GM12878 (cell line): ENCODE measurements at regions of chr9 and their contacts with region 1.

Region 1: DNA sequence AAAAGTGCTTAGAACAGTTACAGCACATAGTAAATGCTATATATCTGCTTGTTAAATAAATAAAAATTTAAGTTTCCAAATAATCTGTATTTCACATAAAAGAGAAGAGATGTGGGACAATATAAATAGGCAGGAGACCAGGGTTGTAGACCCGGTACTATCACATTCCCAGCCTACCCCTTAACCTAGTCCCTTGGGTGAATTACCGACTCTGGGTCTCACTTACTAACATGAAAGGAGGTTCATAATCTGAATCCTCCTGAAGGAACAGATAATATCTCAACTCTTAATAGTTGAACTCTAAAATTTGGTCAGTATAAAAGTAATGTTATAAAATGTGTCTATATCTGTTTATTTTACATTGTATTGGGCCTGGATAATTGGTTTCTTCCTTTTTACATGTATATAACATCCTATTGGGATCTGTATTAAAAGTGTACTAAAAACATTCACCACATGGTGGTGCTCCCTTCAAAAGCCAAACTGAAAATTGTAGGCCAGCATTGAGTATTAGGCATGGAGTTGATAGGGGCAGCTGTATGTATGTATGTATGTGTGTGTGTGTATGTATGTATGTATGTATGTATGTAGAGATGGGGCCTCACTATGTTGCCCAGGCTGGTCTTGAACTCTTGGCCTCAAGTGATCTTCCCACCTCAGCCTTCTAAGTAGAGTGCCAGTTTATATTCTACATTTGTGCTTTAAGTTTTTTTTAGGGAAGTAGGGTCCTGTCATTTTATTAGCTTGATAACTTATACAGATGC is 64.2 kb upstream of the ABL1 start:
- DNase-seq: no peak
- ATAC-seq: peak; percentile 83
- H3K4me3 ChIP-seq: no peak overlapping the region
- H3K27ac ChIP-seq: no peak overlapping the region
- H3K4me1 ChIP-seq: peaks cover 27% of the 10 kb centered on the region
- H3K27me3 ChIP-seq: no peaks in the 10 kb centered on the region
- CTCF ChIP-seq: peak; percentile 55 to 58 (median 55)
- EP300 ChIP-seq: no peak
- POLR2A ChIP-seq: no peak
- RAD21 ChIP-seq: peak; percentile 85

Region 2: DNA sequence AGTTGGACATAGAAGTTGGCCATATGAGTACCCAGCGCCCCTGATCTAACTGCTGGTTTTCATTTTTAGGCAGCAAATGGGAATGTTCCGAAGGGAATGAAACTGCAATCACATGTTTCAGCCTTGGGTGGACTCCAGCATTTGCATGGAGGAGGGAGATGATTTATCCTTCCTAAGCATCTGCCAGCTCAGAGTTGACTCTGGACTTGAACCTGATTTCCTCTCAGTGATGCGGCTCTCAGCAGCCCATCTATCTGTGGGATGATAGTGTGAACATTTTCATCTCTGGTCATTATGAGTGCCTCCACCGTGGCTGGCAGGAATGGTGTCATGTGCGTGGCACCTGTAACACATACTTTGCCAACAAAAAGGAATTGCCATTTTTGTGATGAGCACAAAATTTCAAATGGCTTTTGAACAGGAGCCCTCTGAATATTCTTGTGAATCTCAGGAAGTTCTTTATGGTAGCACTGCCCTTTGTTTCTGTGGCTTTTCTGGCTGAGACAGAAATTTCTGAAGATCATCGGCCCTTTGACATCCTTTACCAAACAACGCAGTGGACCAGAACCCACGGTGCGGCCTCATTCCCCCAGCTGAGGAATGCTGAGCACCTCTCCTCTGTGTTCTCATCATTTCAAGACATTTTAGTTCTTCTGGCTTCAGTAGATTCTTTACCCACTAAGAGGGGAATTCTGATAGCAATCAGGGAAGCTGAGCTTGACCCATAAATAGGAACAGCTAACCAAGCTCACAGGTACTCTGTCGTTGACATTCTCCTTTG is 163.0 kb before region 1 on chr9:
- CTCF ChIA-PET with region 1: no interaction called
- POLR2A ChIA-PET with region 1: no interaction called
- RAD21 ChIA-PET with region 1: no interaction called
- SMC1A ChIA-PET with region 1: no interaction called
- in situ Hi-C with region 1: no loop called
- intact Hi-C with region 1: no loop called
- DNase-seq: no peak
- ATAC-seq: no peak
- H3K4me3 ChIP-seq: no peak overlapping the region
- H3K27ac ChIP-seq: no peak overlapping the region
- H3K4me1 ChIP-seq: no peaks in the 10 kb centered on the region
- H3K27me3 ChIP-seq: no peaks in the 10 kb centered on the region
- CTCF ChIP-seq: no peak
- EP300 ChIP-seq: no peak
- POLR2A ChIP-seq: no peak
- RAD21 ChIP-seq: no peak

Region 3: DNA sequence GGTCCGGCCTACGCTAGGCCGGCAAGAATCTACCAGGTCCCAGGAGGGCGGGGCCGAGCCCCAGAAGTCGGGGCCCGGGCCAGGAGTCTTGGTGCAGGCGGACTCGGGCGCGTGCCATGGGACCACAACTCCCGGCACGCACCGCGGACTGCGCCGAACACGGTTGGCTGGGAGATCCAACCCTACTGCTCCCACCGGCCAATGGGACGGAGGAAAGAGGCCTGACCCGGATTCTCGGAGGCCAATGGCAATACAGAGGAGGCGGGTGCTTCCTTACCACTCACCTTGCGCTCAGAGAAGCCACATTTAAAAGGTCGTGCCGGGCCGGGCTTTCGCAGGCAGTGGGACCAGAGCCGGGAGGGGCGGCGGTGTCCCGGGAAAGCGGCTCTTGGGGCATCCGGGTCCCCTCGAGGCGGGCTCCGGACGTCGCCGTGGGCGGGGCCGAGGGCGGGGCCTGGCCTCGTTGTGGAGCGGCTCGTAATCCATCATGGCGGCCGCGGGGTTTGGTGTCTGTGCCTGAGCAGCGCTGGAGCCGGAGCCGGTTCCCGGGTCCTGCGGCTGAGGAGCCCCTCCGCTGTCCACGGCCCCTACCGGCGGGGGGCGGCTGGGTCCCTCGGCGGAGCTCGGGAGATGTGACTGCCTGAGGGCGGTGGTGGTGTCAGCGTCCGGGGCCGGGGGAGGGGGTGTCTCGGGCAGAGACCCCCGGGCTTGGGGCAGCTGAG is 58.1 kb before region 1 on chr9:
- CTCF ChIA-PET with region 1: interaction called, 22 read pairs
- POLR2A ChIA-PET with region 1: no interaction called
- RAD21 ChIA-PET with region 1: interaction called, 10 read pairs
- SMC1A ChIA-PET with region 1: interaction called, 14 read pairs
- in situ Hi-C with region 1: no loop called
- intact Hi-C with region 1: no loop called
- DNase-seq: peak; percentile 91
- ATAC-seq: peak; percentile 99
- H3K4me3 ChIP-seq: peak overlapping the region; percentile 98
- H3K27ac ChIP-seq: peak overlapping the region; percentile 96
- H3K4me1 ChIP-seq: no peaks in the 10 kb centered on the region
- H3K27me3 ChIP-seq: no peaks in the 10 kb centered on the region
- CTCF ChIP-seq: no peak
- EP300 ChIP-seq: no peak
- POLR2A ChIP-seq: peak; percentile 90
- RAD21 ChIP-seq: no peak

Region 4: GRCh38 chr9:130842545-130842944 is 71.7 kb after region 1 on chr9:
- CTCF ChIA-PET with region 1: interaction called, 9 read pairs
- POLR2A ChIA-PET with region 1: no interaction called
- RAD21 ChIA-PET with region 1: no interaction called
- SMC1A ChIA-PET with region 1: interaction called, 14 read pairs
- in situ Hi-C with region 1: no loop called
- intact Hi-C with region 1: no loop called
- DNase-seq: no peak
- ATAC-seq: 0 out of 3 replicates have a peak, but pooled peaks have one; percentile 24
- H3K4me3 ChIP-seq: no peak overlapping the region
- H3K27ac ChIP-seq: no peak overlapping the region
- H3K4me1 ChIP-seq: no peaks in the 10 kb centered on the region; the same call in 1 of the 2 replicates
- H3K27me3 ChIP-seq: no peaks in the 10 kb centered on the region
- CTCF ChIP-seq: no peak
- EP300 ChIP-seq: no peak
- POLR2A ChIP-seq: no peak
- RAD21 ChIP-seq: no peak

Region 5: GRCh38 chr9:130866474-130866965 is 95.7 kb after region 1 on chr9:
- CTCF ChIA-PET with region 1: interaction called, 190 read pairs
- POLR2A ChIA-PET with region 1: no interaction called
- RAD21 ChIA-PET with region 1: interaction called, 28 read pairs
- SMC1A ChIA-PET with region 1: interaction called, 25 read pairs
- in situ Hi-C with region 1: loop called (anchors 5 kb)
- intact Hi-C with region 1: loop called (anchors 1 kb)
- DNase-seq: peak; percentile 17
- ATAC-seq: peak; percentile 50
- H3K4me3 ChIP-seq: no peak overlapping the region
- H3K27ac ChIP-seq: no peak overlapping the region
- H3K4me1 ChIP-seq: peaks cover 19% of the 10 kb centered on the region
- H3K27me3 ChIP-seq: no peaks in the 10 kb centered on the region
- CTCF ChIP-seq: peak; percentile 67 to 79 (median 78)
- EP300 ChIP-seq: no peak
- POLR2A ChIP-seq: no peak
- RAD21 ChIP-seq: peak; percentile 57

Region 6: GRCh38 chr9:130912932-130913598 is 142.2 kb after region 1 on chr9:
- CTCF ChIA-PET with region 1: no interaction called
- POLR2A ChIA-PET with region 1: no interaction called
- RAD21 ChIA-PET with region 1: no interaction called
- SMC1A ChIA-PET with region 1: no interaction called
- in situ Hi-C with region 1: no loop called
- intact Hi-C with region 1: no loop called
- DNase-seq: no peak
- ATAC-seq: no peak
- H3K4me3 ChIP-seq: no peak overlapping the region
- H3K27ac ChIP-seq: no peak overlapping the region
- H3K4me1 ChIP-seq: no peaks in the 10 kb centered on the region
- H3K27me3 ChIP-seq: no peaks in the 10 kb centered on the region
- CTCF ChIP-seq: no peak
- EP300 ChIP-seq: no peak
- POLR2A ChIP-seq: no peak
- RAD21 ChIP-seq: no peak

Region 7: DNA sequence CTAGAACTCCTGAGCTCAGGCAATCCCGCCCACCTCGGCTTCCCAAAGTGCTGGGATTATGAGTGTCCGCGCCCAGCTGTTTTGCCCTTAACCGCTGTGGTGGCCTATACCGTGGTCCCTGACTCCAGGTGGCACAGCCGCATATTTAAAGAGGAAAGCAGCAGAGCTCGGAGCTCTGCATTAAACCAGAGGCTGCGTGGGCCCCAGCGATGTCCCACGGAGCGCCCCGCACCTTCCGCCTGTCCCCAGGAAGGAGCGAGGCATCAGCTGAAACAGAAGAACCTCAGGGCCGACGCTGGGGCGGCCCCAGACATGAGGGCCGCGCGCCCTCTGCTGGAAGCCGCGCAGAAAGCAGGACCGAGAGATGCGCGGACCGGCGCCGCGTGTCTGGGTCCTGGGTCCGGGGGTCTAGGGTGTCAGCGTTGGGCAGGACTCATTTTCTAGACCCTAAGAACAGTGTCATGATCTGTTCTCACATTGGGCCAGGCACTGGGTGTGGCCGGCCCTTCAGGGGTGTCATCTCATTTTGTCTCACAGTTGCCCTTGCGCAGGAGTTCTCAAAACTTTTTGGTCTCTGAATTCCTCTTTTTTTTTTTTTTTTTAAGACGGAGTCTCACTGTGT is 275.8 kb after region 1 on chr9:
- CTCF ChIA-PET with region 1: interaction called, 7 read pairs
- POLR2A ChIA-PET with region 1: no interaction called
- RAD21 ChIA-PET with region 1: no interaction called
- SMC1A ChIA-PET with region 1: no interaction called
- in situ Hi-C with region 1: no loop called
- intact Hi-C with region 1: loop called (anchors 10 kb)
- DNase-seq: no peak
- ATAC-seq: peak; percentile 96
- H3K4me3 ChIP-seq: no peak overlapping the region
- H3K27ac ChIP-seq: no peak overlapping the region
- H3K4me1 ChIP-seq: peaks cover 13% of the 10 kb centered on the region
- H3K27me3 ChIP-seq: no peaks in the 10 kb centered on the region
- CTCF ChIP-seq: peak; percentile 92 to 95 (median 92)
- EP300 ChIP-seq: no peak
- POLR2A ChIP-seq: no peak
- RAD21 ChIP-seq: peak; percentile 94

Region 8: GRCh38 chr9:131214286-131214856 is 443.5 kb after region 1 on chr9:
- CTCF ChIA-PET with region 1: no interaction called
- POLR2A ChIA-PET with region 1: no interaction called
- RAD21 ChIA-PET with region 1: no interaction called
- SMC1A ChIA-PET with region 1: no interaction called
- in situ Hi-C with region 1: no loop called
- intact Hi-C with region 1: no loop called
- DNase-seq: no peak
- ATAC-seq: no peak
- H3K4me3 ChIP-seq: no peak overlapping the region
- H3K27ac ChIP-seq: no peak overlapping the region
- H3K4me1 ChIP-seq: no peaks in the 10 kb centered on the region
- H3K27me3 ChIP-seq: no peaks in the 10 kb centered on the region
- CTCF ChIP-seq: no peak
- EP300 ChIP-seq: no peak
- POLR2A ChIP-seq: no peak
- RAD21 ChIP-seq: no peak